Natural killer cell (primary cell): ENCODE measurements at regions of chr2 and their contacts with region 1.

Region 1: DNA sequence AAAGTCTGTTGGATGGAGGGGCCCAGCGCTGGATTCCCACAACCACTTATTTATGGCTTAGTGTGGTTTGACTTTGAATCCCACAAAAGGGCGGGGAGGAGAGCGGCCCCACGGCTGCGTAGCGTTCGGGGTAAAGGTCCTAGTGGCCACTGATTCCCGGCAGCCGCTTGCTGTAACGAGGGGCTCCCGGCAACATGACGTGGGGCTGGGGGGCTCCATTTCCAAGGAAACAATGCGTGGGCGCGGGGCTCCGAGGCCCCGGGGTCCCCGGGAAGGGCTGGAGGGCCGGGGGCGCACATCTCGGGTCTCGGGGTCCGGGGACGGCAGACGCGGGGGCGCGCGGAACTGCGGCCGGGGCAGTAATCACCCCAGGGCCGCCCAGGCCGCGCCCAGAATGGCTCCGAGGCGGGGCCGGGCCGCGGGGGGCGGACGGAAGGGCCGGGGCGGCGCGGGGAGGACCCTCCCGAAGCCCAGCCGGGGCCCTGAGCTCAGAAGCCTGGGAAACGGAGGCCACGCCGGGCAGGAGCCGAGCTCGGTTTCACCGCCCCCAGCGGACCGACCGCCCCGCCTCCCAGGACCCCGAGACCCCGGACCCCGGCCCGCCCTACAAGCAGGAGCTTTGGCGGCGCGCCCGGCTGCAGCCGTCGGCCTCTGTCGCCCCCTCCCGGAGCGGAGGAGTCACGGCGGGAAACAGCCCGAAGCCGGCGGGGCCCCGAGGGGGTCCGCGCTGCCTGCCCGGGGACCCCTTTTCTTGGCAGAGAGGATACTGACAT is 11.9 kb upstream of the MLPH start:
- DNase-seq: peak; percentile 78 to 84
- ATAC-seq: peak; percentile 89 to 91 (median 90)
- H3K4me3 ChIP-seq: peak overlapping the region; percentile 66
- H3K4me3 Mint-ChIP-seq: peak overlapping the region; percentile 92
- H3K27ac ChIP-seq: peak overlapping the region; percentile 54
- H3K27ac Mint-ChIP-seq: peak overlapping the region; percentile 21 to 84
- H3K4me1 ChIP-seq: peaks cover 17% of the 10 kb centered on the region
- H3K4me1 Mint-ChIP-seq: peaks cover 6 to 17% of the 10 kb centered on the region in 2 donors
- H3K27me3 ChIP-seq: peaks cover 9% of the 10 kb centered on the region
- H3K27me3 Mint-ChIP-seq: peaks cover 29 to 32% of the 10 kb centered on the region in 2 donors
- CTCF ChIP-seq: peak; percentile 95

Region 2: DNA sequence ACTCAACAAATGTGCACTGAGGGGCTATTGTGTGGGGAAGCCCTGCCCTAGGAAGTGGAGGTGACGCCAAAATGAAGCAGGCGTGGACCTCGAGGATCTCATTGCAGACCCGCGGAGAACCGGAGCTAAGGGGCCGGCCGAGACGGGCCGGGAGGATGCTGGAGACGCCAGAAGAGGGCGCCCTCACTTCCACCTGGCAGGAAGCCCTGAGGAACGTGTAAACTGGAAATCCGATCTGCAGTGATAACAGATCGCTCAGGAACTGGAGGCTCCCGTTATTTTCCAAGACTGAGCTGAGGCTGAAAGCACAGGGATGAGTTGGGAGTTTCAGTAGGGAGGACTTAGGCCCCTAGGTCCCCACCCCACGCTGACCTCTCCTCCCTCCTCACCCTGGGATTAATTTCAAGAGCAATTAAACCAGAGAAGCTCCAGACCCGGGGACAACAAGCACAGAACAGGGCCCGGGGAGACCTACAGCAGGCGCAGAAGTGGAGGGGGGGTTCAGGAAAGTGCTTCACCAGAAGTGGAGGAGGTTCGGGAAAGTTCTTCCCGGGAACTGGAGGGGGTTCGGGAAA is 53.5 kb before region 1 on chr2:
- intact Hi-C with region 1: loop called (anchors 1 kb)
- DNase-seq: peak; percentile 68 to 90
- ATAC-seq: peak; percentile 61 to 93 (median 90)
- H3K4me3 ChIP-seq: no peak overlapping the region
- H3K4me3 Mint-ChIP-seq: peak overlapping the region; percentile 30
- H3K27ac ChIP-seq: no peak overlapping the region
- H3K27ac Mint-ChIP-seq: no peak overlapping the region
- H3K4me1 ChIP-seq: peaks cover 8% of the 10 kb centered on the region
- H3K4me1 Mint-ChIP-seq: peaks cover 6 to 7% of the 10 kb centered on the region in 2 donors
- H3K27me3 ChIP-seq: no peaks in the 10 kb centered on the region
- H3K27me3 Mint-ChIP-seq: peaks cover 13 to 41% of the 10 kb centered on the region in 2 donors
- CTCF ChIP-seq: peak; percentile 83